ENCODE measurements at regions of chr11 and their contacts with region 1.

Region 1: GRCh38 chr11:83819933-83820549 is 533.9 kb upstream of the CCDC90B start:
- DNase-seq: no peak
- H3K4me3 ChIP-seq: no peak overlapping the region
- H3K27ac ChIP-seq: no peak overlapping the region
- H3K4me1 ChIP-seq: no peaks in the 10 kb centered on the region
- H3K27me3 ChIP-seq: no peaks in the 10 kb centered on the region
- CTCF ChIP-seq: peak; percentile 30 to 79 (median 56)
- POLR2A ChIP-seq: no peak

Region 2: DNA sequence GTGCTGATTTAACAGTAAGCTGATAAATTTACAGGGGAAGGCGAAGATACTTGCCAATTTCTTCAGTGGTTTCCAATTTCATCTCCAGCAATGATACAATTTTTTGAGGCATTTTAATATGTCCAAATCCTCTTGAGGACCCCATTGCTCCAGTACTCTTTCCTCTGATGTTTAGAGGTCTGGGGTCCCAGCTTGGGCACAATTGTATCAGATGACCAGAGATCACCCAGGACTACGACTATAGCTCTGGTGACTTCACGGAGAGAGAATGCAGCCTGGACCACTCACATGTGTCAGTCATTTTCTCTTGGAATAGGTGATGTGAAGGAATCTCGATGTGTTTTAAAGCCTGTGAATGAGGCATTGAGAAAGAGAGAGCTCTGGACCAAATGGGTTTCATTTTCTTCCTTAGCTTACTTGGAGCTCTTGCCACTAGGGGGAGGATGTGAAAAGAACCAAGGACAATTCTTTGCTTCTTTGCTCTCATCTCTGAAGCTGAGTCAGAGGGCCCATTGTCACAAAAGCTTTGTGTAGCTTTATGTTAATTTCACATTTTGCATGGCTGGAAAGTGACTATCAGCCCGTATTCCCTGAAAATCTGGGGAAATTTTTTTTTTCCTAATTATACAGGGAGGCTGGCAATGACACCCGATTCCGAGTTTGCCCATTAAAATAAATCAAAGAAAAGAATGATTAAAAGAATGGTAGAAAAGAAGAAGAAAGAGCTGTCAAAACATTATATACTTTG is 527.2 kb before region 1 on chr11:
- intact Hi-C with region 1: loop called (anchors 10 kb)
- DNase-seq: no peak
- H3K4me3 ChIP-seq: peak overlapping the region in 1 of 4 donors; percentile 29
- H3K27ac ChIP-seq: no peak overlapping the region
- H3K4me1 ChIP-seq: no peaks in the 10 kb centered on the region
- H3K27me3 ChIP-seq: no peaks in the 10 kb centered on the region
- CTCF ChIP-seq: peak; percentile 28 to 75 (median 56)
- POLR2A ChIP-seq: no peak

Region 3: GRCh38 chr11:84091212-84091986 is 271.4 kb after region 1 on chr11:
- intact Hi-C with region 1: no loop called
- DNase-seq: no peak
- H3K4me3 ChIP-seq: no peak overlapping the region
- H3K27ac ChIP-seq: no peak overlapping the region
- H3K4me1 ChIP-seq: no peaks in the 10 kb centered on the region
- H3K27me3 ChIP-seq: no peaks in the 10 kb centered on the region
- CTCF ChIP-seq: no peak
- POLR2A ChIP-seq: no peak